Activated CD4-positive, alpha-beta T cell treated with anti-CD3 and anti-CD28 coated beads, Interleukin-2, amount 10 ng/mL, durations not matched to agents 7 days and 5 days (primary cell): ENCODE measurements at regions of chr7 and their contacts with region 1.

Region 1: GRCh38 chr7:100705753-100706671 is at the start of gene POP7:
- DNase-seq: peak; percentile 99
- H3K4me3 Mint-ChIP-seq: peak within 1 kb of the TSS; percentile 94
- H3K27ac Mint-ChIP-seq: peak within 1 kb of the TSS; percentile 97
- H3K4me1 Mint-ChIP-seq: peaks cover 22% of the 10 kb centered on the region
- H3K27me3 Mint-ChIP-seq: peaks cover 5% of the 10 kb centered on the region
- total RNA-seq, gene POP7: 39.9 to 40.5 TPM

Region 2: DNA sequence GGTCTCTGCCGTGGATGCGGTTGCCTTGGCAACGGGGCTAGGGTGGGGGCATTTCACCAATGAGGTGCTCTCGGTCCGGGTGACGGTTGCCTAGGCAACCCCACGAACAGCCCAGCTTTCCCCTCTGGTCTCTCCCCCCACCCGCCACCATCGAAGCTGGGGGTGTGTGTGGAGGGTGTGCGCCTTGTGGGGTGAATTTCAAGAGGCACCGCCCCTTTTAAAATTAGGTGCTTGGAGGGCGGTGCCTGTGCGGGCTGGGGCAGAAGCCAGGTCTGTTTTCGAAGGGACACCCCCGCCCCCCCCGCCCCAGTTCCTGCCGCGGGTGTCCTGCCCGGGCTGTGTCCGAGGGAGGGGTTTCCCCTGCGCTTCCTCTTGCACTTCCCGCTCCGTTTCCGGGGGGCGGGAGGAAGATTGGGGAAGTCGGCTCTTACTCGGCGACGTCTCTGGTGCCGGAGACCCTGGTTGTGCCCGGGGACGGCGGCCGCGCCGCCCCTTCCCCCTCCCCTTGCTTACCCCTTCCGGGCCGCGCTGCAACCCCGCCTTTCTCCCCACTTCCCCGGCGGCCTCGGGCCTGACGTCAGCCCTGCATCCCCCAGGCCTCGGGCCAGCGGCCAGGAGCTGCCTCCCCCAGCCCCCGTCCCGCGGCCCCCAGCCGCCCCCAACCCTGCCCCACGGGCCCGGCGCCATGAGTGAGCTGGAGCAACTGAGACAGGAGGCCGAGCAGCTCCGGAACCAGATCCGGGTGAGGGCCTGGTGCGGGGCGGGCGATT is 30.2 kb before region 1 on chr7:
- CTCF ChIA-PET with region 1: interaction called, 12 read pairs
- POLR2A ChIA-PET with region 1: no interaction called
- DNase-seq: peak; percentile 89
- H3K4me3 Mint-ChIP-seq: peak overlapping the region; percentile 86
- H3K27ac Mint-ChIP-seq: peak overlapping the region; percentile 88
- H3K4me1 Mint-ChIP-seq: peaks cover 42% of the 10 kb centered on the region
- H3K27me3 Mint-ChIP-seq: peaks cover 5% of the 10 kb centered on the region

Region 3: DNA sequence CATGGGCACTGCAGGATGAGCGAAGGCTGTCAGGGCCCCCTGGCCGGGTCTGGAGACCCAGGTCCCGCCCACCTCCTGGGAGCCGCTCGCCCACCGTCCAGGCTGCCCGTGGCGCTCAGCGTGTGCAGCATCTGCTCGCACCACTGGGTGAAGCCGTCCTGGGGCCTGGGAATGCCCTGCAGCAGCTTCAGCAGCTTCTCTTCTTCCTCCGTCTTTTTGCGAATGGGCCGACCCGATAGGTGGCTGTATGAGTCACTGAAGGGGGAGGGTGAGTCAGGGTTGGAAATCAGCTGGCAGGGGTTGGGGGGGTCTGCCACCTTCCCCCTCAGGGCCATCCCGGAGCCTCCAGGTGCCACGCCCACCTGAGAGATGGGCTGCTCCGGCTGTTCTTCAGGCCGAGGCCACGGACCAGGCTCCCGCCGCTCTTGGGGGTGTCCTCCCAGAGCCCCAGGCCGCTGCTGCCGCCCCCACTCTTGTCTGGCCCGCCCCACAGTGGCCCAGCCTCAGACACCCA is 23.7 kb before region 1 on chr7:
- CTCF ChIA-PET with region 1: interaction called, 16 read pairs
- POLR2A ChIA-PET with region 1: no interaction called
- DNase-seq: no peak
- H3K4me3 Mint-ChIP-seq: no peak overlapping the region
- H3K27ac Mint-ChIP-seq: no peak overlapping the region
- H3K4me1 Mint-ChIP-seq: peaks cover 31% of the 10 kb centered on the region
- H3K27me3 Mint-ChIP-seq: no peaks in the 10 kb centered on the region

Region 4: DNA sequence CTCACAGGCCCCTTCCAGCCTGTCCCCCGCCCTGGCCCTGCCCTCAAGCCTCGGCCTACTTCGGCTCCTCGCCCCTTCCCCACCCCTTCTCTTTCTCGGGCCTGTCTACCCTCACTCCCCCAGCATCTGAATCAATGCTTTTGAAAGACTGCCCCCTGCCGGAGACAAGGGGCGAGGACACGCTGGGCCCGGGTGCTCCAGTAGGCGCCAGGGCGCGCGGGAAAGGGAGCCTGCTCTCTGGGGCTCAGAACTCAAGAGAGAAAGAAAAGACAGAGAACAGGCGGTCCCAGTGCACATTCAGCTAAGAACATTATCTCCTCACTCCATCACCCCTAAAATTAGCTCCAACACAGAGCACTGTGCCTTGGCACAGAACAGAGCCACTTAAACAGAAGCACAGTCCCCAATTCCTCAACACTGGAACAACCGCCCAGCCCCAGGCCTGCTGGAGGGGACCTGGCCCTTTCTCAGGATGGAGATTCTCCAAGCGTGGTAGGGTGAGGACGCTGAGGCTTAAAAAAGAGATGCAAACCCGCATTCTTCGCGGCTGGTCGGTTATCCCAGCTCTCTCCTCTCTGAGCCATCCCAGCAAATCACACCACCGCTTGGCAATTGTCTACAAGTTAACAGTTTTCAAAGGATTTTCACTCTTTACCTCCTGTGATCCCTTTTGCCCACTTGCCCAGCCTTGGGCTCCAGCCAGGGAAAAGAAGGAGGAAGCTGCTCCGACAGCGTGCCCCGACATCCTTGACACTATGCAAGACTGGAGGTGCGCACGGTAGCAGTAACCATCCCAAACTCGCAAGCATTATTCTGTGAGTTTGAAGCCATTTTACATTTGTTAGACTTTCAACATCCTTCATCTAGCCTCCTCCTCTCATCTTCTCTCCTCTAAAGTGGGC is 14.1 kb before region 1 on chr7:
- CTCF ChIA-PET with region 1: interaction called, 26 read pairs
- POLR2A ChIA-PET with region 1: no interaction called
- DNase-seq: peak; percentile 89
- H3K4me3 Mint-ChIP-seq: peak overlapping the region; percentile 96
- H3K27ac Mint-ChIP-seq: peak overlapping the region; percentile 22
- H3K4me1 Mint-ChIP-seq: peaks cover 40% of the 10 kb centered on the region
- H3K27me3 Mint-ChIP-seq: peaks cover 9% of the 10 kb centered on the region

Region 5: GRCh38 chr7:100723732-100724275 is 17.8 kb after region 1 on chr7:
- CTCF ChIA-PET with region 1: interaction called, 15 read pairs
- POLR2A ChIA-PET with region 1: no interaction called
- DNase-seq: no peak
- H3K4me3 Mint-ChIP-seq: no peak overlapping the region
- H3K27ac Mint-ChIP-seq: no peak overlapping the region
- H3K4me1 Mint-ChIP-seq: peaks cover 3% of the 10 kb centered on the region
- H3K27me3 Mint-ChIP-seq: peaks cover 35% of the 10 kb centered on the region

Region 6: GRCh38 chr7:100735730-100736129 is 29.7 kb after region 1 on chr7:
- CTCF ChIA-PET with region 1: interaction called, 10 read pairs
- POLR2A ChIA-PET with region 1: no interaction called
- DNase-seq: no peak
- H3K4me3 Mint-ChIP-seq: no peak overlapping the region
- H3K27ac Mint-ChIP-seq: no peak overlapping the region
- H3K4me1 Mint-ChIP-seq: peaks cover 5% of the 10 kb centered on the region
- H3K27me3 Mint-ChIP-seq: peaks cover 2% of the 10 kb centered on the region

Region 7: GRCh38 chr7:100852048-100852872 is 146.2 kb after region 1 on chr7 and contains the start of gene SLC12A9:
- CTCF ChIA-PET with region 1: interaction called, 40 read pairs
- POLR2A ChIA-PET with region 1: interaction called, 3 read pairs
- DNase-seq: peak; percentile 89
- H3K4me3 Mint-ChIP-seq: peak within 1 kb of the TSS; percentile 97
- H3K27ac Mint-ChIP-seq: peak within 1 kb of the TSS; percentile 80
- H3K4me1 Mint-ChIP-seq: peaks cover 22% of the 10 kb centered on the region
- H3K27me3 Mint-ChIP-seq: no peaks in the 10 kb centered on the region
- total RNA-seq, gene SLC12A9: 44.1 to 49.1 TPM